Motor neuron (in vitro differentiated cells): ENCODE measurements at regions of chr1 and their contacts with region 1.

Region 1: DNA sequence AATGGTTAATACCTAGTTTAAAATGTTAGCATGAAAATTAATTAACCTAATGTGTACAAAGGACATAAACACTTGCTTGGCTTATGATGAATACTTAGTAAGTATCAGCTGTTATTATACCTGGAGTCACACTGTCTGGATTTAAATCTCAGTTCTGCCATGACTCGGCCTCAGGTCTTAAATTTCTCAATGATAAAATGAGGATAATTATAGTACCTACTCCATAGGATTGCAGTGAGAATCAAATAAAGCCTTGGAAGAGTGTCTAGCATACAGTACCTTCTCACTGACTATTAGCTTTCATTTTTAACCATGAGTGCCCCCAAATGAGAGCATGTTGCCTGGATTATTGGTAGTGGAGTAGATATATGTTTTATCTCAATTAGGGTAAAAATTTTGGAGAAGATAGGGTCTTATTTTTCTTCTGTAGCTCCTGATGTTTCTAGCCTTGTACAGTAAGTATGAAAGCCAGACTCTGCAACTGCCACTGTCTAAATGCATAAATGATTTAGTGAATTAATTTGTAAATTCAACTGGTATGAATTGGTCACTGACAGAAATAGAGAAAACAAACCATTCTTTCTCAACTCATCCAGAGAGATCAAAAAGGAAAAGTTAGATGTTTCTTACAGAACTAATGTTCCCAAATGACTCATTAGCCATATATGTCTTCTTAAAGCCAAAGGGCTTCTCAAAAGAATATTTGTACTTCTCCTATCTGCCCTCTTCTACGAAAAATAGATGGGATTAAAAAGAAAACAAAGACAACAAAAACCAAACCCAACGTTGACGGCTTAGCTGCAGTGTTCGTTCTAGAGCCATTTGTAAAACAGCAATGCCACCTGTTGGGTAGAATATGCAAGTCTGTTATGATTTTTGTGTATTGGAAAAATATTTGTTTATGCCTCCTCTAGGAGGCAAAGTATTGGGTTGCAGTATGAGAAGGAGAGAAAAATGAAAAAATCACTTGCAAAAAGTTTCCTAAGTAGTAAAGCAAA is 53.8 kb upstream of the MROH9 start:
- ATAC-seq: peak in 3 of 8 experiments; percentile 60 to 84 (median 76)
- H3K4me3 ChIP-seq: no peak overlapping the region
- H3K27ac ChIP-seq: no peak overlapping the region
- H3K4me1 ChIP-seq: no peaks in the 10 kb centered on the region

Region 2: DNA sequence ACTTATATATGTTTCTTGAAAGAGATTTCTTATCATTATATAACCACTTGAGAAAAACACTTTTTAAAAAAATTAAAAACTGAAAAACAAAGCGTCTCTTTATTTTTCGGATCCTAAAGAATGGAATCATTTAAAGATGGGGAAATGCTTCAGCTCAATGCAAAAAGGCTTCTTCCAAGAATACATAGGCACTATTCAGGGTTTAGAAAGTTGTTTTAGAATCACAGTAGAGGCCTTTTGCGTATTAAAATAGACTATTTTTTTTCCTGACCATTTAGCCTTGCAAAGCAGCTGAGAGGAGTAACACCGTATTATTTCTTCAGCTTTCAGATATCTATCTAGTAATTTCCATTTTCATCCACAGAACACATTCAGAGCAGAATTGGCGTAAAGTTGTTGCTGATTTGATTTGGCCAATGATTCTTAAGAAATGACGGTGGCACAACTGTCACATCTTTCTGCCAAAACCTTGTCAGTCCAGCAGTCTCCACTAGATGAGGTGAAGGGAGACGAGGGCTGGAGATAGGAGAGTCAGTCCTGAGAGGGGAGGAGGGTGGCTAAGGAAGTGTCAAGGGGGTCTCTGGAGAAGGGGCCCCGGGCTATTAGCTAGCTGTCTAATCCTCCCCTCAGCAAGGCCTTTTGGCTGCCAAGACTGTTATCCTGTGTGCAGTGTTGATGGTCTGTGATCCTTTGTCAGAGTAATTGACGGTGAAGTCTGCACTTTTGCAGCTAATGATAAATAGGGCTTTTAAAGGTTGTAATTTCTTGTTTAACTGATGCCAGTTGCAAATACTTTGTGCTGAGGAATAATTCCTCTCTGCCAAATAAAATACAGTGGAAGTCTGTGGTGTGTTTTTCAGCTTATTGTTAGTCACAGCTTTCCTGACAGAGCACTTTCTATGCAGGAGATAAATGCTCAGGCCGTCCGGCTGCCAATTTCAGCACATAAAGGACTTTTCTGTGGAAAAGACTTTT is 183.0 kb before region 1 on chr1:
- in situ Hi-C with region 1: loop called in 2 of 9 experiments (anchors 25 kb)
- ATAC-seq: peak; percentile 30 to 89 (median 82)
- H3K4me3 ChIP-seq: no peak overlapping the region
- H3K27ac ChIP-seq: no peak overlapping the region
- H3K4me1 ChIP-seq: peaks cover 10 to 13% of the 10 kb centered on the region in 2 donors

Region 3: GRCh38 chr1:171389171-171389570 is 507.6 kb after region 1 on chr1:
- in situ Hi-C with region 1: no loop called
- ATAC-seq: no peak
- H3K4me3 ChIP-seq: no peak overlapping the region
- H3K27ac ChIP-seq: no peak overlapping the region
- H3K4me1 ChIP-seq: no peaks in the 10 kb centered on the region

Region 4: GRCh38 chr1:171438192-171438840 is 556.7 kb after region 1 on chr1:
- in situ Hi-C with region 1: no loop called
- ATAC-seq: peak in 3 of 8 experiments; percentile 79 to 91 (median 83)
- H3K4me3 ChIP-seq: no peak overlapping the region
- H3K27ac ChIP-seq: no peak overlapping the region
- H3K4me1 ChIP-seq: no peaks in the 10 kb centered on the region